ENCODE measurements at regions of chr13 and their contacts with region 1.

Region 1: DNA sequence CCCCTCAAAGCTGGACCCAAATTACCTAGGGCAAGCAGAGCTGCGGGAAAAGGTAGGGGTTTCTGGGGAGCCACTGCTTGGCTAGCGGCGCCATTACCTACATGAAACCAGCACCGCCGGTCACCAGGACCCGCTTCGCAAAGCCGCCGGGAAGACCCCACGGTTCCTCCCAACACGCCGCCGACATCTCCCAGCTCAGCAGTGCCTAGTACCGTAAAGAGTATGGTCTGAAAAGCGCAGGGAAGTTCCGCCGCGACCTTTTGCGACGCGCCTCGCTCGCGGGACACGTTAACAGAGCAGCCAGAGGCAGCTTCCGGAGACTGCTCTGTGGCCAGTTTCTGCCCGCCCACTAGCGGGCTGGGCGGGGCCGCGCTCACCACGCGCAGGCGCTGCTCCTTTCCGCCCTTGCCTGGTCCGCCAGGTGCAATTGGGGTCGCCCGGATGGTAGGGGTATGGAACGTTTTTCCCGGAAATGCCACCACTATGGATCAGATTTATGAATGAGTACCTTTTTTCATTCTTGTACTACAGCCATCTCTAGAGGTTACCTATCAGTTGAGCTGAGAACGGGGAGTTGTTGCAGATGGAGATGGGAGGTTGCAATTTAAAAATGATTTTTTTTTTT is at the start of gene TGDS:
- DNase-seq: peak; percentile 82
- ATAC-seq: peak; percentile 97
- H3K4me3 Mint-ChIP-seq: peak within 1 kb of the TSS; percentile 91
- H3K27ac Mint-ChIP-seq: peak within 1 kb of the TSS; percentile 89
- H3K4me1 Mint-ChIP-seq: peaks cover 31% of the 10 kb centered on the region
- H3K27me3 Mint-ChIP-seq: no peaks in the 10 kb centered on the region
- CTCF ChIP-seq: no peak
- total RNA-seq, gene TGDS: 11.5 and 12.7 TPM in 2 replicates

Region 2: GRCh38 chr13:94558716-94559115 is 37.3 kb before region 1 on chr13:
- CTCF ChIA-PET with region 1: no interaction called
- POLR2A ChIA-PET with region 1: no interaction called
- intact Hi-C with region 1: no loop called
- DNase-seq: no peak
- ATAC-seq: no peak
- H3K4me3 Mint-ChIP-seq: no peak overlapping the region
- H3K27ac Mint-ChIP-seq: no peak overlapping the region
- H3K4me1 Mint-ChIP-seq: no peaks in the 10 kb centered on the region
- H3K27me3 Mint-ChIP-seq: no peaks in the 10 kb centered on the region
- CTCF ChIP-seq: no peak

Region 3: GRCh38 chr13:94579063-94579462 is 17.0 kb before region 1 on chr13:
- CTCF ChIA-PET with region 1: no interaction called
- POLR2A ChIA-PET with region 1: no interaction called
- intact Hi-C with region 1: loop called (anchors 2 kb)
- DNase-seq: no peak
- ATAC-seq: no peak
- H3K4me3 Mint-ChIP-seq: no peak overlapping the region
- H3K27ac Mint-ChIP-seq: no peak overlapping the region
- H3K4me1 Mint-ChIP-seq: no peaks in the 10 kb centered on the region
- H3K27me3 Mint-ChIP-seq: no peaks in the 10 kb centered on the region
- CTCF ChIP-seq: no peak

Region 4: GRCh38 chr13:95349267-95349666 is 753.2 kb after region 1 on chr13:
- CTCF ChIA-PET with region 1: no interaction called
- POLR2A ChIA-PET with region 1: no interaction called
- intact Hi-C with region 1: no loop called
- DNase-seq: no peak
- ATAC-seq: no peak
- H3K4me3 Mint-ChIP-seq: no peak overlapping the region
- H3K27ac Mint-ChIP-seq: no peak overlapping the region
- H3K4me1 Mint-ChIP-seq: no peaks in the 10 kb centered on the region
- H3K27me3 Mint-ChIP-seq: peaks cover 3% of the 10 kb centered on the region
- CTCF ChIP-seq: no peak